ENCODE measurements at regions of chr7 and their contacts with region 1.

Region 1: GRCh38 chr7:72493850-72494661 is 81.9 kb upstream of the CALN1 start:
- DNase-seq: peak; percentile 77
- H3K4me3 Mint-ChIP-seq: no peak overlapping the region
- H3K27ac Mint-ChIP-seq: no peak overlapping the region
- H3K4me1 Mint-ChIP-seq: no peaks in the 10 kb centered on the region
- H3K27me3 Mint-ChIP-seq: no peaks in the 10 kb centered on the region

Region 2: DNA sequence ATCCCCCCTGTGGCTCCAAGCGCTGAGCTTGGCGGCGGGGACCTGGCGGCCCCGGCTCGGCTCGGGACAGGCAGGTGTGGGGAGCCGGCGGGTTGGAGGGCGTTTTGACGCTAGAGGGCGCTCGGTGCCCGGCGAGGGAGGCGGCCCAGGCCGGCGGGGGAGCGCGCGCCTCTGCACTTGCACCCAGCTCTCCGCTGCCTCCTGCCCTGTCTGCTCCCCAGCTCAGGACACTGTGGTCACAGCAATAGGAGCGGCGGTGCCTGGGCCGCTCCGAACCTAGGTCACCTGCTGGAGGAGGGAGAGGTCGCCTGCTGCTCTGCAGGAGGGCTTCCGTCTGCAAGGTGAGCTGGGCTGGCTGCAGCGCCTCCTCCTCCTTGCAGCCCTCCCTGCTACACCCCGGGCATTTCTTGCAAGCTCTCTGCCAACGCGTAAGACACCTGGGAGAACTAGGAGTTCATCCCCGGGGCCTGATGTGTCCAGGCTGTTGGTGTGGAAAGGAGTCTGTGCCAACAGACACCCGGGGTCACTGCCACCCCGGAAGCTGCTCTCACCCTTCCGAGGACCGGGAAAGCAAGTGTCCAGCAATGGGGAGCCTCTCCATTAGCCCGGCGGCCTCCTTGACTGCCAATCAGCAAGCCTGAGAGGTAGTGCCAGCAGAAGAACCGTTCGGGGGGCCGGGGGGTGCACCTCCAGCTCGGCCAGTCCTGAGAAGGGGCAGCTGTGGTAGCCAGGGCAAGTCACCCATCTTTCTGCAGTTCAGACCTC is 741.7 kb before region 1 on chr7:
- CTCF ChIA-PET with region 1: interaction called, 6 read pairs
- intact Hi-C with region 1: loop called (anchors 5 kb)
- DNase-seq: peak; percentile 60
- H3K4me3 Mint-ChIP-seq: no peak overlapping the region
- H3K27ac Mint-ChIP-seq: no peak overlapping the region
- H3K4me1 Mint-ChIP-seq: no peaks in the 10 kb centered on the region
- H3K27me3 Mint-ChIP-seq: peaks cover 26% of the 10 kb centered on the region

Region 3: GRCh38 chr7:72183684-72184234 is 310.3 kb before region 1 on chr7:
- CTCF ChIA-PET with region 1: no interaction called
- intact Hi-C with region 1: loop called (anchors 10 kb)
- DNase-seq: no peak
- H3K4me3 Mint-ChIP-seq: no peak overlapping the region
- H3K27ac Mint-ChIP-seq: no peak overlapping the region
- H3K4me1 Mint-ChIP-seq: no peaks in the 10 kb centered on the region
- H3K27me3 Mint-ChIP-seq: no peaks in the 10 kb centered on the region

Region 4: DNA sequence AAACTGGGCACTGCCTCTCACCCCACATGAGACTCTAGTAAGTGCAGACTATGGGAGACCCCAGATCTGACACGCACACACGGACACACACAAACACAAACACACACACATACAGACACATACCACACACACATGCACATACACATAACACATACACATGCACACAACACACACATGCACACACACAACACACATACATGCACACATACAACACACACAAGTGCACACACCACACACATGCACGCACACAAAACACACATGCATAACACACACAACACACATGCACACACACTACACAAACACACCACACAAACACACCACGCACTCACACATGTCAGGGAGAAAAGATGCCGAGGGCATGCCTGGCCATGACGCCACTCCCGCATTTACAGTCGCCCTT is 128.5 kb after region 1 on chr7:
- CTCF ChIA-PET with region 1: no interaction called
- intact Hi-C with region 1: no loop called
- DNase-seq: no peak
- H3K4me3 Mint-ChIP-seq: no peak overlapping the region
- H3K27ac Mint-ChIP-seq: no peak overlapping the region
- H3K4me1 Mint-ChIP-seq: peaks cover 2% of the 10 kb centered on the region
- H3K27me3 Mint-ChIP-seq: no peaks in the 10 kb centered on the region

Measured in activated naive CD4-positive, alpha-beta T cell treated with anti-CD3 and anti-CD28 coated beads for 36 hours (primary cell).